ENCODE measurements at regions of chr1 and their contacts with region 1.

Region 1: DNA sequence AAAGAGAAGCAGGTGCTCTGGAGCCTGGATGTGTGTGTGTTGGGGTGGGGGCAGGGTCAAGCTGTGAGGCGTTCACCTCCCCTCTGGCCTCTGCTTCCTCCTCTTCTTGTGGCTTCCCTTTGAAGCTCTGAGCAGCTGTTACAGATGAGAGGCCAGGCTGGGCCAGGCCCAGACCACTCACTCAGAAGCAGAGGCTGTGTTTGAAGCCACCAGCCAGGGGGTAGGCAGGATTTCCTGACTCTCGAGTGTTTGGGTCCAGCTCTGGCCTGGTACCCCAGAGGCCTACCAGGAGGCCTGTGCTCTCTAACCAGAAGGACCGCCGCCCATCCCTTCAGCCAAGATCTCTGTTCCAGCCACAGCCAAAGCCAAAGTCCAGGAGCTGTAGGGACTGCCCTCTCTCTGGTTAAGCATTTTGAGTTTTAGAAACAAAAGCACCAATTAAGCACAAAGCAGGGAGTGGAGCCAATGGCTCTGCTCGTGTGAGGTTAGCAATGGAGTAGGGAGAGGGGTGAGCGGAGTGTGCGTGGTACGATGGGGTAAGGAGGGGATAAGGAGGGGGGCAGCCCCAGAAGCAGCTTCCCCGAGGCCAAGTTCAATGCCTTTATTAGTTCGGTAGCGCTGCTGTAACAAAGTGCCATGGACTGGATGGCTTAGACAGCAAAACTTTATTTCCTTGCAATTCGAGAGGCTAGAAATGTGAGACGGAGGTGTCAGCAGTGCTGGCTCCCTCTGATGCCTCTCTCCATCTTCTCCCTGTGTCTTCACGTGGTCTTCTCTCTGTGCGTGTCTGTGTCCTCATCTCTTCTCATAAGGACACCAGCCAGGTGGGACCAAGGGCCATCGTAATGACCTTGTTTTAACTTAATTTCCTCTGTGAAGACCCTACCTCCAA is 20.5 kb downstream of the RCSD1 start:
- DNase-seq: peak in 1 of 9 experiments; percentile 38
- ATAC-seq: no peak
- H3K4me3 ChIP-seq: peak overlapping the region in 1 of 2 experiments; percentile 18
- H3K4me3 Mint-ChIP-seq: peak overlapping the region; percentile 72
- H3K27ac ChIP-seq: peak overlapping the region in 1 of 2 experiments; percentile 76
- H3K27ac Mint-ChIP-seq: peak overlapping the region; percentile 91
- H3K4me1 ChIP-seq: peaks cover 81% of the 10 kb centered on the region
- H3K4me1 Mint-ChIP-seq: peaks cover 90% of the 10 kb centered on the region
- H3K27me3 ChIP-seq: no peaks in the 10 kb centered on the region
- H3K27me3 Mint-ChIP-seq: no peaks in the 10 kb centered on the region
- CTCF ChIP-seq: no peak

Region 2: DNA sequence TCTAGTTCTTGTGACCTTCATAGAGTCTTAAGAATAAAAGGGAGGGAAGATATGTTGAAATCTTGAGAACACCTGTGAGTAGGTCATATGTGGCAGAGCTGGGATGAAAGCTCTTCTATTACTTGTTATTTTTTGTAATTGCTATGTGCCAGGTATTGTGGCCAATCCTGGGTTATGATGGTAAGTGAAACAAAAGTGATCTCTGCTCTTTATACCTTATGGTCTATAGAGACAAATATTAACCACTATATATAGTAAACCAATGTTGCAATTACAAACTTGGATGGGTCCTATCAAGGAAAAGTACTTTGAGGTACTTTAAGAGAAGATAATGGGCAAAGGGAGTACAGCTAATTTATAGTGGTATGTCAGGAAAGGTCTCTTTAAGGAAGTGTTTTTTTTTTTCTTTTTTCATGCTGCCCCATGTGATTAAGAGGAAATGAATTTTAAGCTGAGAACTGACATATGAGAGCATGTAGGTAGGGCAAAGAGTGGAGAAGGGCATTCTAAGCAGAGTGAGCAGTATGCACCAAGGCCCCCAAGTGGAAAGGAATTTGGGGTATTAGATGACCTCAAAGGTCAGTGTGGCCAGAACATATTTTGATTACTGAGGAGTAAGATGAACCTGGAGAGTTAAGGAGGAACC is 386.6 kb before region 1 on chr1:
- CTCF ChIA-PET with region 1: no interaction called
- POLR2A ChIA-PET with region 1: no interaction called
- intact Hi-C with region 1: no loop called
- DNase-seq: peak in 2 of 9 experiments; percentile 6 to 35
- ATAC-seq: peak; percentile 35
- H3K4me3 ChIP-seq: no peak overlapping the region
- H3K4me3 Mint-ChIP-seq: no peak overlapping the region
- H3K27ac ChIP-seq: peak overlapping the region in 1 of 2 experiments; percentile 18
- H3K27ac Mint-ChIP-seq: no peak overlapping the region
- H3K4me1 ChIP-seq: peaks cover 48% of the 10 kb centered on the region
- H3K4me1 Mint-ChIP-seq: peaks cover 34% of the 10 kb centered on the region
- H3K27me3 ChIP-seq: no peaks in the 10 kb centered on the region
- H3K27me3 Mint-ChIP-seq: no peaks in the 10 kb centered on the region
- CTCF ChIP-seq: no peak

Region 3: GRCh38 chr1:167322483-167322882 is 328.0 kb before region 1 on chr1:
- CTCF ChIA-PET with region 1: no interaction called
- POLR2A ChIA-PET with region 1: no interaction called
- intact Hi-C with region 1: no loop called
- DNase-seq: no peak
- ATAC-seq: no peak
- H3K4me3 ChIP-seq: no peak overlapping the region
- H3K4me3 Mint-ChIP-seq: no peak overlapping the region
- H3K27ac ChIP-seq: no peak overlapping the region
- H3K27ac Mint-ChIP-seq: no peak overlapping the region
- H3K4me1 ChIP-seq: no peaks in the 10 kb centered on the region
- H3K4me1 Mint-ChIP-seq: no peaks in the 10 kb centered on the region
- H3K27me3 ChIP-seq: no peaks in the 10 kb centered on the region
- H3K27me3 Mint-ChIP-seq: no peaks in the 10 kb centered on the region
- CTCF ChIP-seq: no peak

Region 4: DNA sequence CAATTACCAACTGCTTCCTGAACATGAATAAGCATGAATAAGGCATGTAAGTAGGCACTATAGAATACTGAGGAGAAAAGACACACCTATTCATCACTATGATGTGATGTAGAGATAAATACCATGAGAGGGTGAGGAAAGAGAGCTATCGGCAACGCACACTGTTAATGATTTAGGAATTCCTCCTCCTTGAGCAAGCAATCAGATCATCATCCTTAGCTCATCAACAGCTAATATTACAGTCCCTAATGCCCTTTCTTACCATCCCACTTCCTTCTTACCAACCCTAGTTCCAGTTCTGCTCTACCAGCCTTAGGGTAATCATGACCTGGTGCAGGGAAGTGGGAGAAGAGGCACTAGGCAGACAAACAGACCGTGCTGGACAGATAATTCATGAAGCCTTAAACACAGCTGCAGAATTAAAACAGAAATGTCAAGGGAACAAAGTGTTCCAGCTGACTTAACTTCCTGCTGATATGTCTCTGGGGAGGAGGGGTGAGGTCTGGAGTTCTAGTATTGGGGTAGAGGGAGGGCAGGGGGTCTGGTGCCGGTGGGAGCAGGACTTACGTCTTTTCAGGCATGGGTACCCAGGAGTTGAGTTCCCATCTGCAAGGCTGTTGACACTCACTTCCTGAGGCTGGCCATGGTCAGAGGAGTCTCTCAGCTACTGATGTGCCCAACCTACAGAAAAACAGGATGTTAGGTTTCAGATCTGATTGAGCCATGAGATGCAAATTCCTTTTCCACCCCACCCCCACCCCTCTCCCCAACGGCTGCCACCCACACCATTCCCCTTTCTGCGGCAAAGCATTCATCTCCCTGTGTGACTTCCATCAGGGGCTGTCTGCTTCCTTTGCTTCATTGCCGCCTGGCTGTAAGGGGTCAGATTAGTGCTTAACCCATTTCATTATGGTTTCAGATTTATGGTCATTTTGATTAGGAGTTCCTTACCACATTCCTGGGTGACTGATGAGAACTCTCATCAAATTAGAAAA is 33.1 kb before region 1 on chr1:
- CTCF ChIA-PET with region 1: no interaction called
- POLR2A ChIA-PET with region 1: no interaction called
- intact Hi-C with region 1: no loop called
- DNase-seq: peak in 4 of 9 experiments; percentile 31 to 68 (median 46)
- ATAC-seq: peak; percentile 49
- H3K4me3 ChIP-seq: peak overlapping the region in 1 of 2 experiments; percentile 6
- H3K4me3 Mint-ChIP-seq: peak overlapping the region; percentile 60
- H3K27ac ChIP-seq: peak overlapping the region; percentile 9 to 59
- H3K27ac Mint-ChIP-seq: peak overlapping the region; percentile 92
- H3K4me1 ChIP-seq: peaks cover 39% of the 10 kb centered on the region
- H3K4me1 Mint-ChIP-seq: peaks cover 59% of the 10 kb centered on the region
- H3K27me3 ChIP-seq: no peaks in the 10 kb centered on the region
- H3K27me3 Mint-ChIP-seq: no peaks in the 10 kb centered on the region
- CTCF ChIP-seq: no peak

Region 5: GRCh38 chr1:167635156-167635648 is 15.3 kb before region 1 on chr1:
- CTCF ChIA-PET with region 1: interaction called, 13 read pairs
- POLR2A ChIA-PET with region 1: interaction called, 14 read pairs
- intact Hi-C with region 1: no loop called
- DNase-seq: peak in 1 of 9 experiments; percentile 46
- ATAC-seq: no peak
- H3K4me3 ChIP-seq: no peak overlapping the region
- H3K4me3 Mint-ChIP-seq: peak overlapping the region; percentile 8
- H3K27ac ChIP-seq: peak overlapping the region in 1 of 2 experiments; percentile 5
- H3K27ac Mint-ChIP-seq: peak overlapping the region; percentile 97
- H3K4me1 ChIP-seq: peaks cover 76% of the 10 kb centered on the region
- H3K4me1 Mint-ChIP-seq: peaks cover 88% of the 10 kb centered on the region
- H3K27me3 ChIP-seq: no peaks in the 10 kb centered on the region
- H3K27me3 Mint-ChIP-seq: no peaks in the 10 kb centered on the region
- CTCF ChIP-seq: no peak

Region 6: DNA sequence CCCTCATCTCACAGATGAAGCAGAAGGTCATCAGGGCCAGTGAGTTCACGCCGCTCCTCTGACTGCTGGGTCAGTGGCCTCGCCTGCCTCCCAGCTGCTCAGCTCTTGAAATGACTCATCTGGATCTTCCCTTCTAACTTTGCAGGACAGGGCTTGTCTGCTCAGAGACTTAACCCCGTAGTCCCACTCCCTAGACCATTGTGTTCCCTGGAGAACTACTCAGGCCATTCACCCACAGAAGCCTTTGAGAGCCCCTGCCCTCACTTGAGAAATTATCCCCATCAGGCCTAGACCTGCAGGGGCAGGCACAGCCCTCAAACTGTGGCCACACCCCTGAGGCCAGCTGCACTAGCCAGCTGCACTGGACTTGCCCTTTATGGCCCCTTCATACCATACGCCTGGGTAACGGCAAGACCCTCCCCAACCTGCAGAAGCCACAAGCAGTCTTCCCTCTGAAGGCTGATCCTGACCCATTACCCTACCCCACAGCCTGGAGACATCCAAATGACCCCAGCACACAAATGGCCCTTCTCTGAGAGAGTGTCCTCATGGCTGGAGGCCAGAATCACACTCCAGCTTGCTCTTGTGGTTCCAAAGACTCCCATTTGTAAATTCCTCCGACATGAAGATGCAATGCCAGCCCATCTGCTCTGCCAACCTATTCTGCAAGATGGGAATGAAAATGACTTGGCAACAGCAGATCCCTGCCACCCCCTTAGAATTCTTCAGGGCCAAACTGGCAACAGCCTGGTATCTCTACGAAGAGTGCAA is 12.7 kb after region 1 on chr1:
- CTCF ChIA-PET with region 1: interaction called, 3 read pairs
- POLR2A ChIA-PET with region 1: interaction called, 12 read pairs
- intact Hi-C with region 1: loop called in 1 of 2 experiments (anchors 2 kb)
- DNase-seq: no peak
- ATAC-seq: no peak
- H3K4me3 ChIP-seq: no peak overlapping the region
- H3K4me3 Mint-ChIP-seq: no peak overlapping the region
- H3K27ac ChIP-seq: no peak overlapping the region
- H3K27ac Mint-ChIP-seq: peak overlapping the region; percentile 80
- H3K4me1 ChIP-seq: peaks cover 66% of the 10 kb centered on the region
- H3K4me1 Mint-ChIP-seq: peaks cover 86% of the 10 kb centered on the region
- H3K27me3 ChIP-seq: no peaks in the 10 kb centered on the region
- H3K27me3 Mint-ChIP-seq: no peaks in the 10 kb centered on the region
- CTCF ChIP-seq: no peak

Region 7: GRCh38 chr1:167669209-167670124 is 19.0 kb after region 1 on chr1:
- CTCF ChIA-PET with region 1: no interaction called
- POLR2A ChIA-PET with region 1: interaction called, 12 read pairs
- intact Hi-C with region 1: loop called in 1 of 2 experiments (anchors 2 kb)
- DNase-seq: no peak
- ATAC-seq: no peak
- H3K4me3 ChIP-seq: no peak overlapping the region
- H3K4me3 Mint-ChIP-seq: no peak overlapping the region
- H3K27ac ChIP-seq: no peak overlapping the region
- H3K27ac Mint-ChIP-seq: peak overlapping the region; percentile 72
- H3K4me1 ChIP-seq: peaks cover 51% of the 10 kb centered on the region
- H3K4me1 Mint-ChIP-seq: peaks cover 90% of the 10 kb centered on the region
- H3K27me3 ChIP-seq: no peaks in the 10 kb centered on the region
- H3K27me3 Mint-ChIP-seq: no peaks in the 10 kb centered on the region
- CTCF ChIP-seq: no peak